ENCODE measurements at regions of chr7 and their contacts with region 1.

Region 1: DNA sequence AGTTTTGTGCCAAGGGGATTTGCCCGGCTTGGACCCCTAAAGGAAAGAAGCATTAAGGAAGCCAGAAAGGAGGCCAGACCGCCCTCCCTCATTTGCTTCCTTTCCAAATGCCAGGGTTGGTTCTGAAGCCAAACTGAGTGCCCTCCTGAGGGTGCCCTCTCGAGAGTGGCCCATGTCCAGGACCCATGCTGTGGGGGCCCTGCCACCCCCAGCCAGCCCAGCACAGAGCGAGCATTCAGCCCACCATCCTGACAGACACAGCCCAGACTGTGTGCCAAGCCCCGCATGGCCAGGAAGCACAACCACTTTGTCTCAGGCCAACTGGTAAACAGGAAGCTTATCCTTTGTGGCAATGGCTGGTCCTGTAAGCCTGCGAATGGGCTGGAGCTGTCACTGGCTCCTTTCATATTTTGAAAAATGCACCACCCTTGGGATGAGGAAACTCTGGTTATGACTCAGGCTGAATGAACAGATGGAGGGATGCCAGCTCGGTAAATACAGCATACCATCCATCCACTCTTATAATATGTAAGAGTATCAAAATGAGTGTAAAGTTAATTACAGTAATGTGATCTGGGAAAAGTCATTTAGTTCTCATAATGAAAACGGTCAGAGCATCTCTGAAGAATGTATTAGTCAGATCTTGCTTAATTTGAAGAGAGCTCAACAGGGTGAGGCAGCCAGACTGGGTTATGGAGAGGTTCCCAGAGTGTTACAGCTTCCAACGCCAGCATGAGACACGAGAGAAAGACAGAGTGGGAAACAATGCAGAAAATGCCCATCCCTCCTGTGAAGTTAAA is 65.0 kb downstream of the STK17A start:
- DNase-seq: peak in 3 of 9 donors; percentile 34 to 53 (median 50)
- ATAC-seq: peak; percentile 2
- H3K4me3 ChIP-seq: peak overlapping the region; percentile 22
- H3K4me3 Mint-ChIP-seq: peak overlapping the region; percentile 78 to 91 (median 83)
- H3K27ac ChIP-seq: peak overlapping the region; percentile 80
- H3K27ac Mint-ChIP-seq: peak overlapping the region in 8 of 9 donors; percentile 90 to 100 (median 98)
- H3K4me1 ChIP-seq: peaks cover 88 to 89% of the 10 kb centered on the region in 2 donors
- H3K4me1 Mint-ChIP-seq: peaks cover 78 to 98% (median 95%) of the 10 kb centered on the region in 7 donors
- H3K27me3 ChIP-seq: no peaks in the 10 kb centered on the region
- H3K27me3 Mint-ChIP-seq: no peaks in the 10 kb centered on the region

Region 2: GRCh38 chr7:42931834-42932651 is 715.8 kb before region 1 on chr7 and contains the starts of genes MRPL32 and PSMA2:
- CTCF ChIA-PET with region 1: no interaction called
- POLR2A ChIA-PET with region 1: no interaction called
- intact Hi-C with region 1: loop called in 1 of 2 experiments (anchors 5 kb)
- DNase-seq: peak; percentile 83 to 97 (median 94)
- ATAC-seq: peak; percentile 99
- H3K4me3 ChIP-seq: peak within 1 kb of the TSS; percentile 100
- H3K4me3 Mint-ChIP-seq: peak within 1 kb of the TSS; percentile 88 to 100 (median 98)
- H3K27ac ChIP-seq: peak within 1 kb of the TSS; percentile 89
- H3K27ac Mint-ChIP-seq: peak within 1 kb of the TSS; percentile 92 to 100 (median 97)
- H3K4me1 ChIP-seq: peaks cover 24 to 48% of the 10 kb centered on the region in 2 donors
- H3K4me1 Mint-ChIP-seq: peaks cover 31 to 93% (median 71%) of the 10 kb centered on the region in 7 donors
- H3K27me3 ChIP-seq: no peaks in the 10 kb centered on the region
- H3K27me3 Mint-ChIP-seq: no peaks in the 10 kb centered on the region
- total RNA-seq, gene MRPL32: 27.7 to 58.2 (median 53.4) TPM
- total RNA-seq, gene PSMA2: 29.3 to 144 (median 35.3) TPM

Region 3: GRCh38 chr7:43572516-43573049 is 75.3 kb before region 1 on chr7:
- CTCF ChIA-PET with region 1: no interaction called
- POLR2A ChIA-PET with region 1: no interaction called
- intact Hi-C with region 1: no loop called
- DNase-seq: peak in 1 of 9 donors; percentile 34
- ATAC-seq: peak; percentile 95
- H3K4me3 ChIP-seq: no peak overlapping the region
- H3K4me3 Mint-ChIP-seq: peak overlapping the region in 1 of 10 donors; percentile 45
- H3K27ac ChIP-seq: no peak overlapping the region
- H3K27ac Mint-ChIP-seq: peak overlapping the region in 1 of 9 donors; percentile 58
- H3K4me1 ChIP-seq: no peaks in the 10 kb centered on the region
- H3K4me1 Mint-ChIP-seq: peaks cover 0 to 31% (median 5%) of the 10 kb centered on the region in 7 donors
- H3K27me3 ChIP-seq: no peaks in the 10 kb centered on the region
- H3K27me3 Mint-ChIP-seq: peaks cover 0 to 4% (median 0%) of the 10 kb centered on the region in 5 donors

Region 4: GRCh38 chr7:43625453-43625852 is 22.4 kb before region 1 on chr7:
- CTCF ChIA-PET with region 1: interaction called, 8 read pairs
- POLR2A ChIA-PET with region 1: interaction called, 210 read pairs
- intact Hi-C with region 1: loop called in 1 of 2 experiments (anchors 1 kb)
- DNase-seq: peak in 7 of 9 donors; percentile 56 to 75 (median 68)
- ATAC-seq: peak; percentile 89
- H3K4me3 ChIP-seq: no peak overlapping the region
- H3K4me3 Mint-ChIP-seq: peak overlapping the region in 9 of 10 donors; percentile 54 to 90 (median 76)
- H3K27ac ChIP-seq: peak overlapping the region; percentile 63
- H3K27ac Mint-ChIP-seq: peak overlapping the region in 7 of 9 donors; percentile 71 to 97 (median 90)
- H3K4me1 ChIP-seq: peaks cover 65 to 76% of the 10 kb centered on the region in 2 donors
- H3K4me1 Mint-ChIP-seq: peaks cover 3 to 96% (median 76%) of the 10 kb centered on the region in 7 donors
- H3K27me3 ChIP-seq: no peaks in the 10 kb centered on the region
- H3K27me3 Mint-ChIP-seq: no peaks in the 10 kb centered on the region

Region 5: GRCh38 chr7:43658718-43659548 is 11.1 kb after region 1 on chr7:
- CTCF ChIA-PET with region 1: interaction called, 3 read pairs
- POLR2A ChIA-PET with region 1: interaction called, 12 read pairs
- intact Hi-C with region 1: loop called (anchors 1 kb)
- DNase-seq: no peak
- ATAC-seq: peak; percentile 16
- H3K4me3 ChIP-seq: no peak overlapping the region
- H3K4me3 Mint-ChIP-seq: peak overlapping the region; percentile 3 to 71 (median 62)
- H3K27ac ChIP-seq: peak overlapping the region; percentile 48
- H3K27ac Mint-ChIP-seq: peak overlapping the region; percentile 70 to 92 (median 84)
- H3K4me1 ChIP-seq: peaks cover 31 to 34% of the 10 kb centered on the region in 2 donors
- H3K4me1 Mint-ChIP-seq: peaks cover 46 to 82% (median 70%) of the 10 kb centered on the region in 7 donors
- H3K27me3 ChIP-seq: no peaks in the 10 kb centered on the region
- H3K27me3 Mint-ChIP-seq: no peaks in the 10 kb centered on the region

Region 6: GRCh38 chr7:43679210-43680068 is 31.6 kb after region 1 on chr7:
- CTCF ChIA-PET with region 1: no interaction called
- POLR2A ChIA-PET with region 1: interaction called, 7 read pairs
- intact Hi-C with region 1: loop called in 1 of 2 experiments (anchors 5 kb)
- DNase-seq: peak in 3 of 9 donors; percentile 16 to 34 (median 22)
- ATAC-seq: no peak
- H3K4me3 ChIP-seq: no peak overlapping the region
- H3K4me3 Mint-ChIP-seq: peak overlapping the region in 9 of 10 donors; percentile 21 to 72 (median 51)
- H3K27ac ChIP-seq: peak overlapping the region; percentile 21
- H3K27ac Mint-ChIP-seq: peak overlapping the region; percentile 30 to 95 (median 87)
- H3K4me1 ChIP-seq: peaks cover 22 to 24% of the 10 kb centered on the region in 2 donors
- H3K4me1 Mint-ChIP-seq: peaks cover 38 to 92% (median 86%) of the 10 kb centered on the region in 7 donors
- H3K27me3 ChIP-seq: no peaks in the 10 kb centered on the region
- H3K27me3 Mint-ChIP-seq: no peaks in the 10 kb centered on the region

Region 7: GRCh38 chr7:43711503-43711902 is 63.6 kb after region 1 on chr7:
- CTCF ChIA-PET with region 1: no interaction called
- POLR2A ChIA-PET with region 1: no interaction called
- intact Hi-C with region 1: no loop called
- DNase-seq: no peak
- ATAC-seq: no peak
- H3K4me3 ChIP-seq: no peak overlapping the region
- H3K4me3 Mint-ChIP-seq: no peak overlapping the region
- H3K27ac ChIP-seq: no peak overlapping the region
- H3K27ac Mint-ChIP-seq: no peak overlapping the region
- H3K4me1 ChIP-seq: no peaks in the 10 kb centered on the region
- H3K4me1 Mint-ChIP-seq: peaks cover 6 to 64% (median 54%) of the 10 kb centered on the region in 7 donors
- H3K27me3 ChIP-seq: no peaks in the 10 kb centered on the region
- H3K27me3 Mint-ChIP-seq: no peaks in the 10 kb centered on the region

Region 8: DNA sequence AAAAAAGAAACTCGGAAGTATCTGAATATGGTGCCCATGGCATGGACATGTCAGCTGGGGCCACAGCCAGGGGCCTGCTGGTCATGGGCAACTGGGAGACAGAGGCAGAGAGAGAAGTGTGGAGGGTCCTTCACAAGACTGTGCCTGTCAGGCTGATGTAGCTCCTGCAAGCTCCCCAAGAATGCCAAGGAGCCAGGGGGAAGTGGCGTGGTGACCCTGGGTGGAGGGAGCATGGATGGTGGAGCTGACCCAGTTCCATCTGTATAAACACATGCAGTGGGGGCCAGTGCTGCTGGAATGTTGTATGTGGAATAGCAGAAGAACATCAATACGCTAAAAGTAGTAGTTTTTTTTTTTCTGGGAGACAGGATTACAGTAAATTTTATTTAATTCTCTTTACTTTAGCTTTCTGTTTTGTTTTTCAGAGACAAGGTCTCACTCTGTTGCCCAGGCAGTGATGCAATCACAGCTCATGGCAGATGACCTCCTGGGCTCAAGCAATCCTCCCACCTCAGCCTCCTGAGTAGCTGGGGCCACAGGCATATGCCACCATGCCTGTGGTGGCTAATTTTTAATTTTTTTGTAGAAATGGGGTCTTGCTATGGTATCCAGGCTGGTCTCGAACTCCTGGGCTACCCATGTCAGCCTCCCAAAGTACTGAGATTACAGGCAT is 1090.3 kb after region 1 on chr7:
- CTCF ChIA-PET with region 1: no interaction called
- POLR2A ChIA-PET with region 1: no interaction called
- intact Hi-C with region 1: no loop called
- DNase-seq: no peak
- ATAC-seq: no peak
- H3K4me3 ChIP-seq: no peak overlapping the region
- H3K4me3 Mint-ChIP-seq: no peak overlapping the region
- H3K27ac ChIP-seq: no peak overlapping the region
- H3K27ac Mint-ChIP-seq: peak overlapping the region in 2 of 9 donors; percentile 7 to 62
- H3K4me1 ChIP-seq: peaks cover 0 to 3% of the 10 kb centered on the region in 2 donors
- H3K4me1 Mint-ChIP-seq: peaks cover 0 to 17% (median 12%) of the 10 kb centered on the region in 7 donors
- H3K27me3 ChIP-seq: no peaks in the 10 kb centered on the region
- H3K27me3 Mint-ChIP-seq: no peaks in the 10 kb centered on the region